Activated CD4-positive, alpha-beta memory T cell treated with anti-CD3 and anti-CD28 coated beads for 36 hours (primary cell): ENCODE measurements at regions of chr17 and their contacts with region 1.

Region 1: GRCh38 chr17:2244545-2245525 is 58.8 kb downstream of the SMG6 start:
- DNase-seq: peak; percentile 89
- H3K4me3 Mint-ChIP-seq: no peak overlapping the region
- H3K27ac Mint-ChIP-seq: peak overlapping the region; percentile 8
- H3K4me1 Mint-ChIP-seq: peaks cover 34% of the 10 kb centered on the region
- H3K27me3 Mint-ChIP-seq: no peaks in the 10 kb centered on the region

Region 2: DNA sequence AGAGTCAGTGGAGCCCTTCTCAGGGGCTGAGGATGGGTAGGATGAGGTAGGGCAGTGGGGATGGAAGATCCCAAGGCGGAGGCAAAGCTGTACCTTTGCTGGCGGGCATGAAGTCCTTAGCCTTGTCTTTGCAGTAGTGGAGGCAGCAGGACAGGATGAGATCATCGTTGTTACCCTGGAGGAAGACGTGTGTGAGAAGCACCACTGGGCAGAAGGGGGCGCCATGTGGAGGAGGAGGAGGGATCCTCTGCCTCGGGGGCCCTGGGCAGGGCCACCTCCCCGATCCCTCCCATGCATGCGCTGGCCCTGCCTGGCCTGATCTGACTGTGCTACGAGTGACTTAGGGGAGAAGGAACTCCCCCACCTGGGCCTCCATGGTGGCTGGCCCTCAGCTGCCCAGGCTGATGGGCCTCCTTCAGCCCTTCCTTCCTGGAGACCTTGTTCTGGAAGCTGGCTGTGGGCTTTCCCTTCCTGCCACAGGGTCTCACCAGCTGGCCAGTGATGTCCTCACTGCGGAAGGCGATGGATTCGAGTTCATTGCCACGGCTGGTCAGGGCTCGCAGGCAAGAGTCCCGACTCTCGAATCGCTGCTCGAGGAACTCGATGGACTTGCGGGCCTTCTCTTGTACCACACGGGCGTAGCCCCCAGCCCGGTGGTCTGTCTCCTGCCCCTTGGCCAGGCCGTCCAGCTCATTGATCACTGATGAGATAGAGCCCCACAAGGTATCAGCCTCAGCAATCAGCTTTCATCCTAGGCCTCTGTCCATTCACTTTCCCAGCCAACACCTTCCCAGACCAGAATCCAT is 179.7 kb before region 1 on chr17:
- CTCF ChIA-PET with region 1: interaction called, 288 read pairs
- POLR2A ChIA-PET with region 1: interaction called, 3 read pairs
- intact Hi-C with region 1: loop called (anchors 1 kb)
- DNase-seq: peak; percentile 89
- H3K4me3 Mint-ChIP-seq: no peak overlapping the region
- H3K27ac Mint-ChIP-seq: no peak overlapping the region
- H3K4me1 Mint-ChIP-seq: peaks cover 29% of the 10 kb centered on the region
- H3K27me3 Mint-ChIP-seq: peaks cover 2% of the 10 kb centered on the region

Region 3: GRCh38 chr17:2170023-2170422 is 74.8 kb before region 1 on chr17:
- CTCF ChIA-PET with region 1: interaction called, 15 read pairs
- POLR2A ChIA-PET with region 1: no interaction called
- intact Hi-C with region 1: no loop called
- DNase-seq: peak; percentile 40
- H3K4me3 Mint-ChIP-seq: no peak overlapping the region
- H3K27ac Mint-ChIP-seq: no peak overlapping the region
- H3K4me1 Mint-ChIP-seq: no peaks in the 10 kb centered on the region
- H3K27me3 Mint-ChIP-seq: no peaks in the 10 kb centered on the region

Region 4: GRCh38 chr17:2222901-2223616 is 21.8 kb before region 1 on chr17:
- CTCF ChIA-PET with region 1: interaction called, 38 read pairs
- POLR2A ChIA-PET with region 1: interaction called, 3 read pairs
- intact Hi-C with region 1: loop called (anchors 2 kb)
- DNase-seq: peak; percentile 81
- H3K4me3 Mint-ChIP-seq: peak overlapping the region; percentile 57
- H3K27ac Mint-ChIP-seq: peak overlapping the region; percentile 83
- H3K4me1 Mint-ChIP-seq: peaks cover 37% of the 10 kb centered on the region
- H3K27me3 Mint-ChIP-seq: no peaks in the 10 kb centered on the region

Region 5: GRCh38 chr17:2271985-2272702 is 27.3 kb after region 1 on chr17:
- CTCF ChIA-PET with region 1: interaction called, 40 read pairs
- POLR2A ChIA-PET with region 1: interaction called, 9 read pairs
- intact Hi-C with region 1: no loop called
- DNase-seq: peak; percentile 47
- H3K4me3 Mint-ChIP-seq: peak overlapping the region; percentile 40
- H3K27ac Mint-ChIP-seq: peak overlapping the region; percentile 88
- H3K4me1 Mint-ChIP-seq: peaks cover 62% of the 10 kb centered on the region
- H3K27me3 Mint-ChIP-seq: no peaks in the 10 kb centered on the region

Region 6: GRCh38 chr17:2292100-2292499 is 47.3 kb after region 1 on chr17:
- CTCF ChIA-PET with region 1: no interaction called
- POLR2A ChIA-PET with region 1: no interaction called
- intact Hi-C with region 1: no loop called
- DNase-seq: no peak
- H3K4me3 Mint-ChIP-seq: no peak overlapping the region
- H3K27ac Mint-ChIP-seq: no peak overlapping the region
- H3K4me1 Mint-ChIP-seq: peaks cover 27% of the 10 kb centered on the region
- H3K27me3 Mint-ChIP-seq: no peaks in the 10 kb centered on the region